ENCODE measurements at regions of chr3 and their contacts with region 1.

Region 1: DNA sequence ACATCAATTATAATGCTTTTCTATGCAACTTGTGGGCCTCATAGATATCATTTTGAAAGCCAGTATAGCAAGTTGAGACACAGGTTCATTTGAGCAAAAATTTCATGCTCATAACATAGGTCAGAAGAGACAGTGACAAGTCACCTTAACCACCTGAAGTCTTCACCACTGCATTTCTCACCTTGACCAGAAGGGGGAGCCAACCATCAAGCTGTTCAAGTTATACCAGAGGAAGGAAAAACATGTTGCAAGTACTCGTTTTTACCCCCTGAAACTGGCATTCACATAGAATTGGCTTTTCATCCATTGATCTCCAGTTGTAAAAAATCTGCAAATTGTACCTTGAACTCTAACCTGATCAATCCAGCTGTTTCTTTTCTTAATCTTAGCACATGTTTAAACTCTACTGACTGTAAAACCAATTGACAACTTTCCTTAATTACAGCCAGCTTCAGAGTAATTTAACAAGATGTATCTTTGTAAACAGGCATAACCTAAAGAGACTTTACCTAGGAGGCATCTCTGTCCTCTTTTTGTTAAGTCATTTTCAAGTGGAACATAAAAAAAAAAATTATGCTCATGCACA is 1.4 kb downstream of the LMOD3 start:
- DNase-seq: peak; percentile 58 to 92
- ATAC-seq: peak; percentile 84 to 88 (median 87)
- H3K4me3 ChIP-seq: no peak overlapping the region
- H3K4me3 Mint-ChIP-seq: no peak overlapping the region
- H3K27ac ChIP-seq: no peak overlapping the region
- H3K27ac Mint-ChIP-seq: no peak overlapping the region
- H3K4me1 ChIP-seq: no peaks in the 10 kb centered on the region
- H3K4me1 Mint-ChIP-seq: peaks cover 0 to 5% of the 10 kb centered on the region in 2 donors
- H3K27me3 ChIP-seq: no peaks in the 10 kb centered on the region
- H3K27me3 Mint-ChIP-seq: peaks cover 0 to 3% of the 10 kb centered on the region in 2 donors
- CTCF ChIP-seq: peak; percentile 94

Region 2: GRCh38 chr3:69143605-69144004 is 22.6 kb after region 1 on chr3:
- intact Hi-C with region 1: no loop called
- DNase-seq: no peak
- ATAC-seq: no peak
- H3K4me3 ChIP-seq: no peak overlapping the region
- H3K4me3 Mint-ChIP-seq: no peak overlapping the region
- H3K27ac ChIP-seq: no peak overlapping the region
- H3K27ac Mint-ChIP-seq: no peak overlapping the region
- H3K4me1 ChIP-seq: no peaks in the 10 kb centered on the region
- H3K4me1 Mint-ChIP-seq: no peaks in the 10 kb centered on the region
- H3K27me3 ChIP-seq: no peaks in the 10 kb centered on the region
- H3K27me3 Mint-ChIP-seq: peaks cover 8 to 16% of the 10 kb centered on the region in 2 donors
- CTCF ChIP-seq: no peak

Region 3: GRCh38 chr3:69306239-69307185 is 185.5 kb after region 1 on chr3:
- intact Hi-C with region 1: loop called (anchors 1 kb)
- DNase-seq: peak; percentile 36 to 89
- ATAC-seq: peak; percentile 96 to 100 (median 100)
- H3K4me3 ChIP-seq: no peak overlapping the region
- H3K4me3 Mint-ChIP-seq: no peak overlapping the region
- H3K27ac ChIP-seq: no peak overlapping the region
- H3K27ac Mint-ChIP-seq: no peak overlapping the region
- H3K4me1 ChIP-seq: no peaks in the 10 kb centered on the region
- H3K4me1 Mint-ChIP-seq: peaks cover 8% of the 10 kb centered on the region in 2 donors
- H3K27me3 ChIP-seq: no peaks in the 10 kb centered on the region
- H3K27me3 Mint-ChIP-seq: no peaks in the 10 kb centered on the region
- CTCF ChIP-seq: peak; percentile 97

Region 4: DNA sequence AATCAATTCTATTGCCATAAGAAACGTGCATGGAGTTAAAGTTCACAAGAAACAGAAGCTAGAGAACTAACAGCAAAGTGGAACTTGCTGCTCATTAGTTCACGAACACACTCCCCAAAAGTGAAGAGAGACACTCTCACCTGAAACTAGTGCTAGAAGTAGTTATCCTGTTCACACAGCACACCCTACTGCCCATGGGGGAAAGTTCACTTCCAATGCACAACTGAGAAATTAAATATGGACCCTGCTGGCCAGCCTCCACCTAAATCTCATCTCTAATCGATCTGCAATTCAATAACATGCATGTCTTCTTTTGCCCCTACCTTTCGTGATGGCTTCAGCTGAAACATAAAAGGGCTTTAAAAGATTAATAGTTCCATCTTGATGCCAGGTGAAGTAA is 304.3 kb after region 1 on chr3:
- intact Hi-C with region 1: loop called (anchors 1 kb)
- DNase-seq: peak in 1 of 2 donors; percentile 56
- ATAC-seq: peak in 2 of 3 donors; percentile 55 to 73
- H3K4me3 ChIP-seq: no peak overlapping the region
- H3K4me3 Mint-ChIP-seq: no peak overlapping the region
- H3K27ac ChIP-seq: no peak overlapping the region
- H3K27ac Mint-ChIP-seq: no peak overlapping the region
- H3K4me1 ChIP-seq: no peaks in the 10 kb centered on the region
- H3K4me1 Mint-ChIP-seq: no peaks in the 10 kb centered on the region
- H3K27me3 ChIP-seq: no peaks in the 10 kb centered on the region
- H3K27me3 Mint-ChIP-seq: peaks cover 2 to 3% of the 10 kb centered on the region in 2 donors
- CTCF ChIP-seq: peak; percentile 44